ENCODE measurements at regions of chr3 and their contacts with region 1.

Region 1: DNA sequence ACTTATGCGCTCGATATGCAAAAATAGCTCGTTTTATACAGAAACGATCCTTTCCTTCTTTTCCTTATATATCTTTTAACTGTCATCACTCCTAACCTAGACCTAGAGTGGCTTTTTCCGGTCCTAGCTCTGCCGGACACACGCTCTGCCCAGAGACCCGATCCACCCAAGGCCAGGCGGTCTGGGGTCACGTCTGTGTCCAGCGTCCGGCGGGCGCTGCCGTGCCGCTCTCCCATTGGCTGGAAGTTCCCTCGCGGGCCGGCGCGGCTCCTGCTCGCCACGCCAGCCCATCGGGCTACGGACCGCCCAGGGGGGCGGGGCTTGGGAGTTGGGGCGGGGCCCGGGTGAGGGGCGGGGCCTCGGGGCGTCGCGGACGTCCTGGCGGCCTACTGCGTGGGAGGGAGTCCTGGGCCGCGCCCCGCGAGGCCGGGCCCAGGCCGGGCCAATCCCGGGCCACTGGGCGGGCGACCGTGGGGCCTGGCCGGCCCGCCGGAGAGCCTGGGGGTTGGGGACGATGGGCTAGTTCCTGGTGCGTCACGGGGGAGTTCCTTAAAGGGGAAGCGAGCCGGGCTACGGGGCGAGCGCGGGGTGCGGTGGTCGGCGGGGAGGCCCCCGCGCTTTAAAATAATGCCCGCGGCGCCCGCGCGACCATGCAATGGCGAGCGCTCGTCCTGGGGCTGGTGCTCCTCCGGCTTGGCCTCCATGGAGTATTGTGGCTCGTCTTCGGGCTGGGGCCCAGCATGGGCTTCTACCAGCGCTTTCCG is at the start of gene EDEM1:
- DNase-seq: peak; percentile 77 to 98 (median 94)
- ATAC-seq: peak; percentile 76
- H3K4me3 ChIP-seq: peak within 1 kb of the TSS; percentile 94
- H3K4me3 Mint-ChIP-seq: peak within 1 kb of the TSS; percentile 98
- H3K27ac ChIP-seq: peak within 1 kb of the TSS; percentile 89 to 94
- H3K27ac Mint-ChIP-seq: peak within 1 kb of the TSS; percentile 98
- H3K4me1 ChIP-seq: peaks cover 25% of the 10 kb centered on the region
- H3K4me1 Mint-ChIP-seq: peaks cover 39% of the 10 kb centered on the region
- H3K27me3 ChIP-seq: no peaks in the 10 kb centered on the region
- H3K27me3 Mint-ChIP-seq: no peaks in the 10 kb centered on the region
- CTCF ChIP-seq: no peak
- total RNA-seq, gene EDEM1: 106 to 114 TPM

Region 2: DNA sequence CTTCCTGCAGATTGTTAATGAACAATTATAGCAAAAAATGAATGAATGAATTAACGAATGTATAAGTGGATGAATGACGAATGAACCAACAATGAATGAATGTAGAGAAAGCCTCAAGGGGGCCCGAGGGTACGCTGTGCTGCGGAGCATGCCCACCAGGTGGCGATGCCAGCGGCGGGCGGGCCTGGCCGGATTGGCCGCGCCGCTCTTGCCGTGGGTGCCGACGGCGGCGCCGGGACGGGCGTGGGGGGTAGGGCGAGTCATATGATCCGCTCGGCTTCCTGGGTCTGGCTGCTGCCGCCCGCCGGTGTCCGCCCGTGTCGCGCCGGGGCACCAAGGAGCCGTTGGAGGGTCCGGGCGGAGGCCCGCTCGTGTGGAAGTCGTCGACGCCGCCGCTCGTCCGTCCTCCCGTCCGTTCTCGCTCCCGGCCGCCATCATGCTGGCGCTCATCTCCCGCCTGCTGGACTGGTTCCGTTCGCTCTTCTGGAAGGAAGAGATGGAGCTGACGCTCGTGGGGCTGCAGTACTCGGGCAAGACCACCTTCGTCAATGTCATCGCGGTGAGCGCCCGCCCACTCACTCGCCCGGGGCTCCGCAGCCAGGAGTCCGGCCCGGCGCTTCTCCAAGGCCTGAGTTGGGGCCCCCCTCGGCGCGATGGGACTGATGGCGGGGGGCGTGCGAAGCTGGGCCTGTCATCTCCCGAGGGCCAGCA is 65.2 kb before region 1 on chr3 and contains the start of gene ARL8B:
- CTCF ChIA-PET with region 1: interaction called, 5 read pairs
- POLR2A ChIA-PET with region 1: interaction called, 28 read pairs
- intact Hi-C with region 1: loop called (anchors 2 kb)
- DNase-seq: peak; percentile 83 to 94 (median 90)
- ATAC-seq: peak; percentile 99
- H3K4me3 ChIP-seq: peak within 1 kb of the TSS; percentile 94
- H3K4me3 Mint-ChIP-seq: peak within 1 kb of the TSS; percentile 87
- H3K27ac ChIP-seq: peak within 1 kb of the TSS; percentile 79 to 86
- H3K27ac Mint-ChIP-seq: peak within 1 kb of the TSS; percentile 87
- H3K4me1 ChIP-seq: peaks cover 36% of the 10 kb centered on the region
- H3K4me1 Mint-ChIP-seq: peaks cover 50% of the 10 kb centered on the region
- H3K27me3 ChIP-seq: no peaks in the 10 kb centered on the region
- H3K27me3 Mint-ChIP-seq: no peaks in the 10 kb centered on the region
- CTCF ChIP-seq: peak; percentile 97
- total RNA-seq, gene ARL8B: 48.5 to 49.7 TPM

Region 3: DNA sequence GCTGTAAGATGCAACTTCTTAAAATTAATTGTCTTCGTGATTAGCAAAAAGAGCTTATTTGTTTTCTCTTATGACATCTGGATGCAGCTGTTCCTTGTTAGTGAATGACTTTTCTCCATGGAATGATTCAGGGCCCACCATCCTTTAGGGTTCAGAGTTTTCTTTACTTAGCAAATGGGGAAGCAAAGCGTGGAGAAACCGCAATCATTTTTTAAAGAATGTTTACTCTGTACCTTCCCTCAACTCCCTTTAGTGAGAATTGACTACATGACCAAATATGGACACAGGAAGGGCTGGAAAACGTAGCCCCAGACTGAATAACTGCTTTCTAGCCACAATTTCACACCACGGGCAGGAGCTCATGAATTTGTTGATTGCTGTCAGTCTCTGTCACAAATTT is 130.2 kb after region 1 on chr3:
- CTCF ChIA-PET with region 1: no interaction called
- POLR2A ChIA-PET with region 1: no interaction called
- intact Hi-C with region 1: no loop called
- DNase-seq: no peak
- ATAC-seq: no peak
- H3K4me3 ChIP-seq: no peak overlapping the region
- H3K4me3 Mint-ChIP-seq: no peak overlapping the region
- H3K27ac ChIP-seq: no peak overlapping the region
- H3K27ac Mint-ChIP-seq: no peak overlapping the region
- H3K4me1 ChIP-seq: no peaks in the 10 kb centered on the region
- H3K4me1 Mint-ChIP-seq: no peaks in the 10 kb centered on the region
- H3K27me3 ChIP-seq: no peaks in the 10 kb centered on the region
- H3K27me3 Mint-ChIP-seq: peaks cover 8% of the 10 kb centered on the region
- CTCF ChIP-seq: no peak